Activated B cell treated with CpG ODN at 0.5 μM for 24 hours (primary cell): ENCODE measurements at regions of chr6 and their contacts with region 1.

Region 1: GRCh38 chr6:143015300-143015706 is 45.4 kb upstream of the AIG1 start:
- DNase-seq: no peak
- ATAC-seq: peak; percentile 60
- H3K4me3 Mint-ChIP-seq: peak overlapping the region; percentile 8
- H3K27ac Mint-ChIP-seq: peak overlapping the region; percentile 22
- H3K4me1 Mint-ChIP-seq: peaks cover 15% of the 10 kb centered on the region
- H3K27me3 Mint-ChIP-seq: no peaks in the 10 kb centered on the region
- CTCF ChIP-seq: no peak

Region 2: GRCh38 chr6:142763205-142763604 is 252.1 kb before region 1 on chr6:
- CTCF ChIA-PET with region 1: no interaction called
- POLR2A ChIA-PET with region 1: no interaction called
- intact Hi-C with region 1: loop called (anchors 5 kb)
- DNase-seq: no peak
- ATAC-seq: no peak
- H3K4me3 Mint-ChIP-seq: no peak overlapping the region
- H3K27ac Mint-ChIP-seq: peak overlapping the region; percentile 14
- H3K4me1 Mint-ChIP-seq: peaks cover 9% of the 10 kb centered on the region
- H3K27me3 Mint-ChIP-seq: no peaks in the 10 kb centered on the region
- CTCF ChIP-seq: no peak

Region 3: DNA sequence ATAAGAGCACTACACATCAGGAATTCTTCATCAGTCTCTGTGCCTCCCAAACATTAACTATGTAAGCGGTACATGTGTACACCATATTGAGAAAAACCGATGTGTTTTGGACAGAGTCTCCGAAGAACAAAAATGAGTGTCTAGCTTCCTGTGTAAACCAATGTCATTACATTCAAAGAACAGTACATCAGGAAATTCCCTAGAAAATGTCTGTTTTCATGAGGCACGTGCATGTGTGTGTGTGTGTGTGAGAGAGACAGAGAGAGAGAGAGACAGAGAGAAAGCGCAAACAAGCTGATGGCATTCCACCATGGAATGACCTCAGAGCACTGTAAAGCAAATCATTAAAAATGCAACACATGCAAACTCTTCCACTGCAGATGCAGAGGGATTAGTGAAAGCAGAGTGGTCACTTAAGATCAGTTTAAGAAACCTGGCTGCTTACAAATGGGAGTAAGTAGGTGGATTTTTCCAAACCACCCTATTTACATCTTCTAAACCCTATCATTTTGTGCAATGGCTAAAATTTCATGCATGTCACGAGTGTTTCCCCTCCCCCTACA is 204.3 kb before region 1 on chr6:
- CTCF ChIA-PET with region 1: no interaction called
- POLR2A ChIA-PET with region 1: no interaction called
- intact Hi-C with region 1: no loop called
- DNase-seq: no peak
- ATAC-seq: no peak
- H3K4me3 Mint-ChIP-seq: no peak overlapping the region
- H3K27ac Mint-ChIP-seq: peak overlapping the region; percentile 54
- H3K4me1 Mint-ChIP-seq: peaks cover 44% of the 10 kb centered on the region
- H3K27me3 Mint-ChIP-seq: no peaks in the 10 kb centered on the region
- CTCF ChIP-seq: no peak

Region 4: DNA sequence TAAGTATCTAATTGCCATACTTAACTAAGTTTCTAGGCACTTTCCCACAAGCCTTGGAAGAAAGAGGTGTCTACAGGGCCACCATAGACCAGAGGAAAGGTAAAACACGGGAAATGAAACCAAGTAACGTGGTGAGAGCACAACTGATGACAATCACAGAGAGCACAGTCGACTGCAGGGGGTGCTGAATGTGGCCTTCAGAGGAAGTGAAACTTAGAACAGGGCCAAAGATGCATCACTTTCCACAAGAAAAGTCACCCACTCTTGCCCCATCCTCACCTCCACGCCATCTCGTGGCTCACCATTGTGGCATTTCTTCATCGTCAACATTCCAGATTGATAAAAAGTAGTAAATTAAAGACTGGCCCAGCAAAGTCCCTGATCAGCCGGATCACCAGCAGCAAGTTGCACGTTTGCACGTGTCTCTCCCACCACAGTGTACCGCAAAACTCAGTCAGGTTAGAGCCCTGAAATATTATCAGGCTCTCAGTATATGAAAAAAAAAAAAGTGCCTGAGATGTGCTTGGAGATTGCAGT is 101.7 kb before region 1 on chr6:
- CTCF ChIA-PET with region 1: no interaction called
- POLR2A ChIA-PET with region 1: no interaction called
- intact Hi-C with region 1: no loop called
- DNase-seq: peak; percentile 52
- ATAC-seq: peak; percentile 93
- H3K4me3 Mint-ChIP-seq: peak overlapping the region; percentile 78
- H3K27ac Mint-ChIP-seq: peak overlapping the region; percentile 98
- H3K4me1 Mint-ChIP-seq: peaks cover 52% of the 10 kb centered on the region
- H3K27me3 Mint-ChIP-seq: no peaks in the 10 kb centered on the region
- CTCF ChIP-seq: no peak

Region 5: GRCh38 chr6:142952614-142953013 is 62.7 kb before region 1 on chr6:
- CTCF ChIA-PET with region 1: no interaction called
- POLR2A ChIA-PET with region 1: no interaction called
- intact Hi-C with region 1: loop called (anchors 2 kb)
- DNase-seq: peak; percentile 31
- ATAC-seq: peak; percentile 84
- H3K4me3 Mint-ChIP-seq: peak overlapping the region; percentile 56
- H3K27ac Mint-ChIP-seq: peak overlapping the region; percentile 70
- H3K4me1 Mint-ChIP-seq: peaks cover 48% of the 10 kb centered on the region
- H3K27me3 Mint-ChIP-seq: no peaks in the 10 kb centered on the region
- CTCF ChIP-seq: no peak

Region 6: DNA sequence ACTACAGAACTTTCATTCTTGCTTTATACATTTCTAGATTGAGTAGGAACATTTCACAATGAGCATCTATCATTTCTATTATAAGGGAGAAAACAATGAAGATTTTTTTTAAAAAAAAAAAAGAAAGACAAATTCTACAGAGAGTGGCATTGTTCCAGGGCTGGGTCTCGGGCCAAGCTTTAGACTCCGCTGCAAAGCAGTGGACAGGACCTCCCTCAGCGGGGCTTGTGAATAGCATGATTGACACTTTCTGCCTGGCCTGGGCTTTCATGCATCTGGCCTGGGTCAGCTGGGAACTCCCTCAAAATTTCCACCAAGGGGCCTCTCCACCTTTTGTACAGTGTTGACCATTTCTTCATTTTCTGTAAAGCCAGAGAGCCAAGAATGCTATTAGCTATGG is 14.5 kb before region 1 on chr6:
- CTCF ChIA-PET with region 1: no interaction called
- POLR2A ChIA-PET with region 1: no interaction called
- intact Hi-C with region 1: no loop called
- DNase-seq: no peak
- ATAC-seq: no peak
- H3K4me3 Mint-ChIP-seq: no peak overlapping the region
- H3K27ac Mint-ChIP-seq: no peak overlapping the region
- H3K4me1 Mint-ChIP-seq: no peaks in the 10 kb centered on the region
- H3K27me3 Mint-ChIP-seq: no peaks in the 10 kb centered on the region
- CTCF ChIP-seq: no peak

Region 7: GRCh38 chr6:143049611-143050010 is 34.3 kb after region 1 on chr6:
- CTCF ChIA-PET with region 1: no interaction called
- POLR2A ChIA-PET with region 1: no interaction called
- intact Hi-C with region 1: no loop called
- DNase-seq: no peak
- ATAC-seq: no peak
- H3K4me3 Mint-ChIP-seq: no peak overlapping the region
- H3K27ac Mint-ChIP-seq: no peak overlapping the region
- H3K4me1 Mint-ChIP-seq: no peaks in the 10 kb centered on the region
- H3K27me3 Mint-ChIP-seq: peaks cover 9% of the 10 kb centered on the region
- CTCF ChIP-seq: no peak

Region 8: GRCh38 chr6:143060354-143060805 is 45.1 kb after region 1 on chr6:
- CTCF ChIA-PET with region 1: no interaction called
- POLR2A ChIA-PET with region 1: no interaction called
- intact Hi-C with region 1: loop called (anchors 2 kb)
- DNase-seq: peak; percentile 74
- ATAC-seq: peak; percentile 63
- H3K4me3 Mint-ChIP-seq: peak overlapping the region; percentile 93
- H3K27ac Mint-ChIP-seq: peak overlapping the region; percentile 86
- H3K4me1 Mint-ChIP-seq: peaks cover 20% of the 10 kb centered on the region
- H3K27me3 Mint-ChIP-seq: no peaks in the 10 kb centered on the region
- CTCF ChIP-seq: no peak